ENCODE measurements at regions of chr1 and their contacts with region 1.

Region 1: DNA sequence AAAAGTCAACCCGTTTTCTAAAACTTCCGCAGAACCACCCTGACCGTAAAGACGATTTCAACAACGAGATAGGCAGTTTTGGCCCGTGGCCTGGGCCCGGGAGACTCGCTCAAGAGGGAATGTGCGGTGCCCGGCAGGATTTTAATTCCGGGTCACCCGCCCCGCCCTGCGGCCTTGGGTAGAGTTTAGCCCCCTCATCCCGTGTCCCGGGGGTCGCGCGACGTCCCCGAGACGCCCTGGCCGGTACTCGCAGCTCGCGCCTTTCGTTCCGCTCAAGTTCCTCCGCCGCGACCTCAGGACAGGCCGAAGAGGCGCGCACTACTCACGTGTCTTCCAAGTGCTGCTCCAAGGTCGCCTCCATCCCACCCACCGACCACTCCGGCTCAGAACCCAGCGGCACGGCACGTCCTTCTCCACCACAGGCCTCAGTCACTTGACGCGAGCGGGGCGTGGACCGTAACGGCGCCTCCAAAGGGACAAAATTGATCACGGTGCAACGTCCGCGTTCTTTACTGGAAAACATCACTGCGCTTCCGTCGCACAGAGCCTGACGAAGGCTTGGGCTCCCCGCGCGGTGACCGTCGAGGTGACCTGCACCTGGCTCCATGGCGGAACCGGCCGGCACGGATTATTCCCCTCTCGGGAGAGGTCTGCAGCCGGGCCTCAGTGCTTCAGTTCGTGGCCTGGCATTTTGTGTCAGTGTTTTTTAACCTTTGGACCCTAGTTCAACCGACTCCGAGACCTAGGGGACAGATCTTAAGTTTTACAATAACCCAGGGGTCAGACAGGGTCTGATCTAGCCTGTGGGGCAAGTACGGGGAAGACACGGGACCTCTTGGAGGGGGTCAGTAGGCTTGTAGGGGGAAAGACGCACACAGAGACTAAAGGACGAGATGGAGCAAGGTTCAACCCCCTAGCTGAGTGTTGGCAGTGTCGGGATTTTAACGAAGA is at the start of gene LAMTOR5:
- DNase-seq: peak; percentile 98
- H3K4me3 ChIP-seq: peak within 1 kb of the TSS; percentile 61 to 93 (median 82)
- H3K27ac ChIP-seq: peak within 1 kb of the TSS; percentile 93 to 98 (median 95)
- H3K4me1 ChIP-seq: peaks cover 18 to 54% (median 32%) of the 10 kb centered on the region in 6 donors
- H3K27me3 ChIP-seq: no peaks in the 10 kb centered on the region
- CTCF ChIP-seq: peak in 6 of 11 experiments; percentile 7 to 44 (median 24)
- POLR2A ChIP-seq: peak; percentile 70 to 81 (median 81)
- total RNA-seq, gene LAMTOR5: 49.6 to 115 (median 83.3) TPM

Region 2: GRCh38 chr1:110338886-110339406 is 68.6 kb before region 1 on chr1 and contains the start of gene RBM15:
- intact Hi-C with region 1: loop called (anchors 5 kb)
- DNase-seq: peak; percentile 98
- H3K4me3 ChIP-seq: peak within 1 kb of the TSS; percentile 72 to 99 (median 98)
- H3K27ac ChIP-seq: peak within 1 kb of the TSS; percentile 97 to 100 (median 98)
- H3K4me1 ChIP-seq: peaks cover 47 to 60% (median 50%) of the 10 kb centered on the region in 6 donors
- H3K27me3 ChIP-seq: no peaks in the 10 kb centered on the region
- CTCF ChIP-seq: no peak
- POLR2A ChIP-seq: no peak
- total RNA-seq, gene RBM15: 36.7 to 63.7 (median 45.6) TPM

Measured in spleen (tissue), 13 donors.